ENCODE measurements at regions of chr19 and their contacts with region 1.

Region 1: GRCh38 chr19:1942078-1942933 is 1.3 kb downstream of the CSNK1G2 start:
- DNase-seq: peak; percentile 76
- H3K27ac ChIP-seq: peak overlapping the region; percentile 99
- CTCF ChIP-seq: no peak

Region 2: GRCh38 chr19:1715540-1715939 is 226.8 kb before region 1 on chr19:
- CTCF ChIA-PET with region 1: no interaction called
- POLR2A ChIA-PET with region 1: no interaction called
- DNase-seq: no peak
- H3K27ac ChIP-seq: no peak overlapping the region
- CTCF ChIP-seq: no peak

Region 3: DNA sequence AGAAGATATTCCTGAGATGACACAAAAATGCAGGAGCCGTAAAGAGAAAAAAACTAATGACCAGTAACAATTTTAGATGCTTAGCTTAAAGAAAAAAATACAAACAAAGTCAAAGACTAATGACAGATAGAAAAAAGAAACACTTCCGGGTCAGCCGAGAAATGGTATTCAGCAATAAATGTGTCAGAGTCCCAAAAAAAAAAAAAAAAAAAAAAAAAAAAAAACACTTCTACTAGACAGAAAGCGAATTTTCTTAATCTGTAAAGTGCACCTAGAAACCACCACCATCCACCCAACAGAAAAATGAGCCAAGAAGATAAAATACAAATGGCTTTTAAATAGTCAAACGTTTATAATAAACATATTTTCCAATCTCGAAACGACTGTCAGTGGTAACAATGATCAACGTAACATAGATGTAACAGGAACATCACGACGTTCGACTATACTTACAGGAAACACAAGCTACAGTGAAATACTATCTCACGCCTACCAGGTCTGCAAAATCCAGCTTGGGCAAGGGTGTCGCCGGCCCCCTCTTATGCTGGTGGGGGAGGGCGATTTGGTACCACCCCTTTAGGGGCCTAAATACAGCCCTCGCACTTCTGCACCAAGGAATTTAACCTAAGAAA is 67.6 kb before region 1 on chr19:
- CTCF ChIA-PET with region 1: no interaction called
- POLR2A ChIA-PET with region 1: interaction called, 16 read pairs
- DNase-seq: no peak
- H3K27ac ChIP-seq: peak overlapping the region; percentile 90
- CTCF ChIP-seq: no peak

Region 4: GRCh38 chr19:1921825-1922224 is 20.5 kb before region 1 on chr19:
- CTCF ChIA-PET with region 1: no interaction called
- POLR2A ChIA-PET with region 1: no interaction called
- DNase-seq: no peak
- H3K27ac ChIP-seq: 0 out of 2 replicates have a peak overlapping the region, but pooled peaks have one; percentile 7
- CTCF ChIP-seq: no peak